ENCODE measurements at regions of chr5 and their contacts with region 1.

Region 1: GRCh38 chr5:61408476-61409168 is 76.6 kb downstream of the ZSWIM6 start:
- DNase-seq: peak; percentile 99 to 100
- H3K4me3 ChIP-seq: peak overlapping the region in 1 of 2 donors; percentile 31
- H3K27ac ChIP-seq: peak overlapping the region; percentile 26 to 43
- H3K4me1 ChIP-seq: peaks cover 6 to 14% of the 10 kb centered on the region in 2 donors
- H3K27me3 ChIP-seq: no peaks in the 10 kb centered on the region
- CTCF ChIP-seq: no peak

Region 2: DNA sequence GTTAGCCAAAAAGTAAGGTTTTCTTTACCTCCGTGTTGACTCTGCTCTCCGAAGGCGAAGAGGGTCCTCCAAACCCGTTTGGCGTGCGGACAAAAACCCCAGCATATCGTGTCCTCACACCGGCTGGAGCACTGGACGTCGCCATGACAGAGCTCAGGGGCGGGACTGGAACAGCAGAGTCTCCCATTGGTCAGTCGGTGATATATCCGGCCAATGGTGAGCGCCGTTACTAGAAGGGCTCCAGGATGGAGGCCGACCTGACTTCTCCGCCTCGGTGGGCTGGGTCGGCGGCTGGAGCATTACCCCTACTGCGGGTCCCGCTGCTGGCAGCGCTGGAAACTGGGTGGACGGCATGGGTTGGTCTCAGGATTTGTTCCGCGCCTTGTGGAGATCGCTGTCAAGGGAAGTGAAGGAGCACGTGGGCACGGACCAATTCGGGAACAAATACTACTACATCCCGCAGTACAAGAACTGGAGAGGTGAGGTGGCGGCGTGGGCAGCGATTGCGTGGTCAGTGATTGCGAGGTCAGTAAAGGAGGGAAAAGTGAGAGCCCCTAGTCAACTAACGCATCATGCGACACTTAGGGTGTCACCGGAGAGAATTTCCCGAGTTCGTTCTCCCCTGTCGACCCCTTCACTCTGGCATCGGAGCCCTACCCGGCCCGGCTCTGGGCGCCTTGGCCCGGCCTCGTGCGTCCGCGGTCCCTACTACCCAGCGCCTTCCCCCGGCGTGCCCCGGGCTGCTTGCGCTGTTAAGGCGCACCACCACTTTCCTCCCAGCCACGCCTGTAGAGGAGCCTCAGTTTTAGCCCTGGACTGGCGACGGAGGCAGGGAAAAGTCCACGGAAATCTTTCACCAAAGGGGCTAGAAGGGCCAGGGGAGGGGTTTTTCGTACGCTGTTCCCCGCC is 463.5 kb before region 1 on chr5 and contains the starts of genes ERCC8 and NDUFAF2:
- intact Hi-C with region 1: loop called (anchors 10 kb)
- DNase-seq: peak; percentile 77 to 96
- H3K4me3 ChIP-seq: peak within 1 kb of the TSS; percentile 80 to 90
- H3K27ac ChIP-seq: peak within 1 kb of the TSS; percentile 84 to 91
- H3K4me1 ChIP-seq: peaks cover 0 to 4% of the 10 kb centered on the region in 2 donors
- H3K27me3 ChIP-seq: no peaks in the 10 kb centered on the region
- CTCF ChIP-seq: no peak
- total RNA-seq, gene ERCC8: 2.3 TPM
- total RNA-seq, gene NDUFAF2: 38.3 TPM

Region 3: DNA sequence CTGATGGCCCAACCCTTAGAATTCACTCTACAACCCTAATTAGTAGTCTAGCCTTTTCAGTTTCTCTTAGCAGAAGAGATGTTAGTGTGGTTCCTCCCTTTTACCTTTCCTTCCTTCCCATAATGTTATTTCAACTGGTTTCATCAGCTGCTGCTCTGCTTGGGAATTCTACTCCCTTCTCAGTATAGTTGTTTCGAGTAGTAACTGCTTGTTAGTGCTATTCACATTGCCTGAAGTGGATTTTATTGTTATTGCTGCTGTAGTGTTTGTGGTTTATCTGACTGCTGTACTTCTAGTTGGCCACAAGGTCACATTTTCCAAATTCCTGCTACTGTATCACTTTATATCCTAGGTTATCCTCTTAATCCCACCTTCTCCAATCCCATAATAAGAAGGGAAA is 276.1 kb before region 1 on chr5:
- intact Hi-C with region 1: no loop called
- DNase-seq: no peak
- H3K4me3 ChIP-seq: no peak overlapping the region
- H3K27ac ChIP-seq: no peak overlapping the region
- H3K4me1 ChIP-seq: no peaks in the 10 kb centered on the region
- H3K27me3 ChIP-seq: no peaks in the 10 kb centered on the region
- CTCF ChIP-seq: no peak

Region 4: DNA sequence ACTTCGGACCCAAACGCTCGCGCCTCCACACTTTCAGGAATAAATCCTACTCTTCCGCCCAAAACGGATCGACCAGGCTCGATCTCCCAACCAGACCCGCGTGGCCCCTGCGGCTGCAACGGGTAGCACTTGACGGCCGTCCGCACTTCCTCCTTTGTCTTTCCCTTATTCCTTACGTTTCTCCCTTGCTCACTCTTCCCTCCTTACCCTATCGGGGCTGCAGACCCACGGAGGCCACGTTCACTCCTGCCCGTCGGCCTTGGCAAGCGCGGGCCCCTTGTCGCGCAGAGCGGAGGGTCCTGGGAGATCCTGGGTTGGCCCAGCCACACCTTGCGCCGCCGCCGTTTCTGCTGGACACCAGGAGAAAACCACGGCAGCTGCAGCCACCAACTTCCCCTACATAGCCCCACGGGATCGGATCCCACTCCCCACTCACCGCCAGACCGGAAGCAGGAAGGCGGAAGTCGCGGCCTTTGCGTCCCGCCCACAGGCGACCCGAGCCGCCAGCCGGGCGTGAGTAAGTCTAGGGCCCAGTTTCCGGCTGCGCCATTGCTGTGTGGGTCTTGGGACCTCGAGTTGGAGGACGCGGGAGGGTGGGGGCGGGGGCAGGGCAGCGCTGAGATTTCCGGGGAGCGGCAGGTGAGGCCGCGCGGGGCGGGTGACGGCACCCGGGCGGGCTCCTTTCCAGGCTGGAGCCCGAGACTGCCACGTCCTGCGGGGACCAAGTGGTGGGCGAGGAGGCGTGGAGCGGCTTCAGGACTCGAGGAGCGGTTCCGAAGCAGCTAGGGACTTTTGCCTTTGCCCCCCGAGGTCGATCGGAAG is 246.4 kb before region 1 on chr5 and contains the start of gene SMIM15:
- intact Hi-C with region 1: loop called (anchors 2 kb)
- DNase-seq: peak; percentile 53 to 93
- H3K4me3 ChIP-seq: peak within 1 kb of the TSS; percentile 85 to 86
- H3K27ac ChIP-seq: peak within 1 kb of the TSS; percentile 85 to 91
- H3K4me1 ChIP-seq: peaks cover 0 to 6% of the 10 kb centered on the region in 2 donors
- H3K27me3 ChIP-seq: no peaks in the 10 kb centered on the region
- CTCF ChIP-seq: no peak
- total RNA-seq, gene SMIM15: 22.4 TPM

Region 5: GRCh38 chr5:61449804-61450492 is 41.3 kb after region 1 on chr5:
- intact Hi-C with region 1: loop called (anchors 2 kb)
- DNase-seq: peak in 1 of 2 donors; percentile 65
- H3K4me3 ChIP-seq: no peak overlapping the region
- H3K27ac ChIP-seq: peak overlapping the region; percentile 70 to 84
- H3K4me1 ChIP-seq: peaks cover 5 to 23% of the 10 kb centered on the region in 2 donors
- H3K27me3 ChIP-seq: no peaks in the 10 kb centered on the region
- CTCF ChIP-seq: no peak

Region 6: GRCh38 chr5:61496860-61497259 is 88.2 kb after region 1 on chr5:
- intact Hi-C with region 1: loop called (anchors 5 kb)
- DNase-seq: no peak
- H3K4me3 ChIP-seq: no peak overlapping the region
- H3K27ac ChIP-seq: peak overlapping the region in 1 of 2 donors; percentile 29
- H3K4me1 ChIP-seq: no peaks in the 10 kb centered on the region
- H3K27me3 ChIP-seq: no peaks in the 10 kb centered on the region
- CTCF ChIP-seq: no peak